ENCODE measurements at regions of chr17 and their contacts with region 1.

Region 1: GRCh38 chr17:7435221-7435675 is at the start of gene TMEM102:
- DNase-seq: peak; percentile 98 to 99 (median 99)
- H3K4me3 ChIP-seq: peak within 1 kb of the TSS; percentile 89
- H3K4me3 Mint-ChIP-seq: peak within 1 kb of the TSS; percentile 89 to 96 (median 94)
- H3K27ac ChIP-seq: peak within 1 kb of the TSS; percentile 86
- H3K27ac Mint-ChIP-seq: peak within 1 kb of the TSS; percentile 94 to 99 (median 97)
- H3K4me1 ChIP-seq: peaks cover 37% of the 10 kb centered on the region
- H3K4me1 Mint-ChIP-seq: peaks cover 22 to 47% (median 34%) of the 10 kb centered on the region in 4 donors
- H3K27me3 ChIP-seq: peaks cover 17% of the 10 kb centered on the region
- H3K27me3 Mint-ChIP-seq: peaks cover 9 to 10% of the 10 kb centered on the region in 2 donors
- total RNA-seq, gene TMEM102: 20.8 to 21.8 TPM

Region 2: GRCh38 chr17:7239091-7240027 is 195.9 kb before region 1 on chr17 and contains the start of gene PHF23:
- CTCF ChIA-PET with region 1: no interaction called
- POLR2A ChIA-PET with region 1: interaction called, 3 read pairs
- intact Hi-C with region 1: loop called (anchors 1 kb)
- DNase-seq: peak; percentile 97 to 98 (median 98)
- H3K4me3 ChIP-seq: peak within 1 kb of the TSS; percentile 85 to 86
- H3K4me3 Mint-ChIP-seq: peak within 1 kb of the TSS; percentile 94 to 99 (median 96)
- H3K27ac ChIP-seq: peak within 1 kb of the TSS; percentile 85
- H3K27ac Mint-ChIP-seq: peak within 1 kb of the TSS; percentile 90 to 100 (median 98)
- H3K4me1 ChIP-seq: peaks cover 61% of the 10 kb centered on the region
- H3K4me1 Mint-ChIP-seq: peaks cover 41 to 75% (median 54%) of the 10 kb centered on the region in 4 donors
- H3K27me3 ChIP-seq: no peaks in the 10 kb centered on the region
- H3K27me3 Mint-ChIP-seq: peaks cover 0 to 2% of the 10 kb centered on the region in 2 donors
- total RNA-seq, gene PHF23: 45.8 to 55.8 TPM

Region 3: GRCh38 chr17:7351665-7352501 is 83.4 kb before region 1 on chr17 and contains the start of gene KCTD11:
- CTCF ChIA-PET with region 1: interaction called, 88 read pairs
- POLR2A ChIA-PET with region 1: interaction called, 50 read pairs
- intact Hi-C with region 1: loop called (anchors 1 kb)
- DNase-seq: peak; percentile 64 to 88 (median 68)
- H3K4me3 ChIP-seq: peak within 1 kb of the TSS; percentile 29 to 49
- H3K4me3 Mint-ChIP-seq: peak within 1 kb of the TSS; percentile 80 to 95 (median 84)
- H3K27ac ChIP-seq: peak within 1 kb of the TSS; percentile 68
- H3K27ac Mint-ChIP-seq: peak within 1 kb of the TSS; percentile 62 to 95 (median 87)
- H3K4me1 ChIP-seq: peaks cover 44% of the 10 kb centered on the region
- H3K4me1 Mint-ChIP-seq: peaks cover 21 to 61% (median 40%) of the 10 kb centered on the region in 4 donors
- H3K27me3 ChIP-seq: no peaks in the 10 kb centered on the region
- H3K27me3 Mint-ChIP-seq: no peaks in the 10 kb centered on the region
- total RNA-seq, gene KCTD11: 3.5 to 4.3 TPM

Region 4: GRCh38 chr17:7403977-7404736 is 31.1 kb before region 1 on chr17 and contains the start of gene TMEM256:
- CTCF ChIA-PET with region 1: interaction called, 23 read pairs
- POLR2A ChIA-PET with region 1: interaction called, 50 read pairs
- intact Hi-C with region 1: loop called (anchors 1 kb)
- DNase-seq: peak; percentile 91 to 98 (median 94)
- H3K4me3 ChIP-seq: peak within 1 kb of the TSS; percentile 73 to 77
- H3K4me3 Mint-ChIP-seq: peak within 1 kb of the TSS; percentile 93 to 98 (median 97)
- H3K27ac ChIP-seq: peak within 1 kb of the TSS; percentile 51
- H3K27ac Mint-ChIP-seq: peak within 1 kb of the TSS; percentile 89 to 99 (median 98)
- H3K4me1 ChIP-seq: peaks cover 17% of the 10 kb centered on the region
- H3K4me1 Mint-ChIP-seq: peaks cover 16 to 40% (median 18%) of the 10 kb centered on the region in 4 donors
- H3K27me3 ChIP-seq: no peaks in the 10 kb centered on the region
- H3K27me3 Mint-ChIP-seq: peaks cover 2% of the 10 kb centered on the region in 2 donors
- total RNA-seq, gene TMEM256: 35.4 to 38.3 TPM

Region 5: GRCh38 chr17:7491583-7491982 is 56.3 kb after region 1 on chr17:
- CTCF ChIA-PET with region 1: interaction called, 52 read pairs
- POLR2A ChIA-PET with region 1: interaction called, 176 read pairs
- intact Hi-C with region 1: no loop called
- DNase-seq: no peak
- H3K4me3 ChIP-seq: no peak overlapping the region
- H3K4me3 Mint-ChIP-seq: peak overlapping the region in 2 of 8 donors; percentile 0 to 3
- H3K27ac ChIP-seq: no peak overlapping the region
- H3K27ac Mint-ChIP-seq: peak overlapping the region in 6 of 7 donors; percentile 19 to 39 (median 34)
- H3K4me1 ChIP-seq: peaks cover 64% of the 10 kb centered on the region
- H3K4me1 Mint-ChIP-seq: peaks cover 50 to 81% (median 62%) of the 10 kb centered on the region in 4 donors
- H3K27me3 ChIP-seq: no peaks in the 10 kb centered on the region
- H3K27me3 Mint-ChIP-seq: no peaks in the 10 kb centered on the region

Region 6: DNA sequence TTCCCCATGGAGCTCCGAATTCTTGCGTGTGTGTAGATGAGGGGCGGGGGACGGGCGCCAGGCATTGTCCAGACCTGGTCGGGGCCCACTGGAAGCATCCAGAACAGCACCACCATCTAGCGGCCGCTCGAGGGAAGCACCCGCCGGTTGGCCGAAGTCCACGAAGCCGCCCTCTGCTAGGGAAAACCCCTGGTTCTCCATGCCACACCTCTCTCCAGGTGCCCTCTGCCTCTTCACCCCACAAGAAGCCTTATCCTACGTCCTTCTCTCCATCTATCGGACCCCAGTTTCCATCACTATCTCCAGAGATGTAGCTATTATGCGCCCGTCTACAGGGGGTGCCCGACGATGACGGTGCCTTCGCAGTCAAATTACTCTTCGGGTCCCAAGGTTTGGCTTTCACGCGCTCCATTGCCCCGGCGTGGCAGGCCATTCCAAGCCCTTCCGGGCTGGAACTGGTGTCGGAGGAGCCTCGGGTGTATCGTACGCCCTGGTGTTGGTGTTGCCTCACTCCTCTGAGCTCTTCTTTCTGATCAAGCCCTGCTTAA is 125.9 kb after region 1 on chr17:
- CTCF ChIA-PET with region 1: interaction called, 51 read pairs
- POLR2A ChIA-PET with region 1: interaction called, 37 read pairs
- intact Hi-C with region 1: loop called (anchors 1 kb)
- DNase-seq: peak; percentile 75 to 85 (median 76)
- H3K4me3 ChIP-seq: peak overlapping the region; percentile 72 to 84
- H3K4me3 Mint-ChIP-seq: peak overlapping the region; percentile 89 to 98 (median 94)
- H3K27ac ChIP-seq: peak overlapping the region; percentile 96
- H3K27ac Mint-ChIP-seq: peak overlapping the region; percentile 95 to 99 (median 97)
- H3K4me1 ChIP-seq: peaks cover 37% of the 10 kb centered on the region
- H3K4me1 Mint-ChIP-seq: peaks cover 25 to 37% (median 30%) of the 10 kb centered on the region in 4 donors
- H3K27me3 ChIP-seq: no peaks in the 10 kb centered on the region
- H3K27me3 Mint-ChIP-seq: no peaks in the 10 kb centered on the region

Region 7: GRCh38 chr17:7956228-7956965 is 521.1 kb after region 1 on chr17:
- CTCF ChIA-PET with region 1: no interaction called
- POLR2A ChIA-PET with region 1: no interaction called
- intact Hi-C with region 1: no loop called
- DNase-seq: no peak
- H3K4me3 ChIP-seq: no peak overlapping the region
- H3K4me3 Mint-ChIP-seq: no peak overlapping the region
- H3K27ac ChIP-seq: no peak overlapping the region
- H3K27ac Mint-ChIP-seq: peak overlapping the region in 1 of 7 donors; percentile 83
- H3K4me1 ChIP-seq: peaks cover 6% of the 10 kb centered on the region
- H3K4me1 Mint-ChIP-seq: peaks cover 1 to 4% (median 2%) of the 10 kb centered on the region in 4 donors
- H3K27me3 ChIP-seq: no peaks in the 10 kb centered on the region
- H3K27me3 Mint-ChIP-seq: no peaks in the 10 kb centered on the region